ENCODE measurements at regions of chr1 and their contacts with region 1.

Region 1: DNA sequence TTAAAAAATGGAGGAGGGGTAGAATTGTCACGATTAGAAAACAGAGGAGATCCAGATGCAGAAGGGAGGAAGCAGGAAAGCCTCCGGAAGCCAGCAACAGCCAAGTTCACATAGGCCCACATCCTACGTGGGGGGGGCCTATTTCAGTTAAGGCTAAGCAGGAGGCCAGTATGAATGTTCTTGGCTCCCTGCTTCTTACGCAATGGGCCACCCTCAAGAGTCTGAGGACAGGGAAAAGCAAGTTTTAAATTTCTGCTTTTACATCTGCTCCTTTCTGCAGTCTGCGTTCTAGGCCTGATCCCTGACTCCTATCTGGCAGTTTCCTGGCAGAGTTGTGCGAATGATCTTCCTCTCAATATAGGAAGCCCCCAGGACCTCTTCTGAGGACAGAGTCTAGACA is 30.6 kb downstream of the RABIF start:
- DNase-seq: no peak
- H3K4me3 ChIP-seq: no peak overlapping the region
- H3K27ac ChIP-seq: no peak overlapping the region
- H3K4me1 ChIP-seq: no peaks in the 10 kb centered on the region
- H3K27me3 ChIP-seq: peaks cover 25% of the 10 kb centered on the region
- CTCF ChIP-seq: no peak

Region 2: DNA sequence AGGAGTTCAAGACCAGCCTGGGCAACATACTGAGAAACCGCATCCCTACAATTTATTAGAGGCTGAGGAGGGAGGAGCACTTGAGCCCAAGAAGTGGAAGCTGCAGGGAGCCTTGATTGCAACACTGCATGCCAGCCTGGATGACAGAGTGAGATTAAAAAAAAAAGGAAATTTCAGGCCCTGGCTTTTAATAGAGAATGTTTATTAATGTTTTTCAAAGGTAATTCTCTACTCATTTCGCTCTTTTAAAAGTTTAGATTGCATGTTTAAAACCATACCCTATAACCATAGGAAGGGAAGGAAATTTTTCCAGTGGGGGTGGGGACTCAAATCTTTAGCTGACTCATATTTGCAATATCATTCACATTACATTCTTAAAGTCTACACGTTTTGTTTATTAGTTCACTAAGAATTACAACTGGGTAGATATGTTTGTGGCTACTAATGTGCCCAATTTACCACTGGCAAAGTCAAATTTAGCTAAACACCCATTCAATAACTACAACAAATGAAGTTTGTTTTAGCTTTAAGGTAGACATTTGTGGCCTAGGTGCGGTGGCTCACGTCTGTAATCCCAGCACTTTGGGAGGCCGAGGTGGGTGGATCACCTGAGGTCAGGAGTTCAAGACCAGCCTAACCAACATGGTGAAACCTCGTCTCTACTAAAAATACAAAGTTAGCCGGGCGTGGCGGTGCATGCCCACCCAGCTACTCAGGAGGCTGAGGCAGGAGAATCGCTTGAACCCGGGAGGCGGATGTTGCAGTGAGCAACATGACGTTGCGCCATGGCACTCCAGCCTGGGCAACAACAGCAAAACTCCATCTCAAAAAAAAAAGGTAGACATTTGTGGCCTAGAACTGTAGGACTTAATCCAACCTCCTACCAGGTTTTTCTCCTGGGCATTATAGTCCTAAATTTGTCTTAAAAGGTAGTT is 55.1 kb before region 1 on chr1:
- dilution Hi-C with region 1: loop called (anchors 5 kb)
- DNase-seq: no peak
- H3K4me3 ChIP-seq: no peak overlapping the region
- H3K27ac ChIP-seq: peak overlapping the region; percentile 49
- H3K4me1 ChIP-seq: peaks cover 30% of the 10 kb centered on the region
- H3K27me3 ChIP-seq: no peaks in the 10 kb centered on the region
- CTCF ChIP-seq: no peak